PC-3 (cell line): ENCODE measurements at regions of chr16 and their contacts with region 1.

Region 1: DNA sequence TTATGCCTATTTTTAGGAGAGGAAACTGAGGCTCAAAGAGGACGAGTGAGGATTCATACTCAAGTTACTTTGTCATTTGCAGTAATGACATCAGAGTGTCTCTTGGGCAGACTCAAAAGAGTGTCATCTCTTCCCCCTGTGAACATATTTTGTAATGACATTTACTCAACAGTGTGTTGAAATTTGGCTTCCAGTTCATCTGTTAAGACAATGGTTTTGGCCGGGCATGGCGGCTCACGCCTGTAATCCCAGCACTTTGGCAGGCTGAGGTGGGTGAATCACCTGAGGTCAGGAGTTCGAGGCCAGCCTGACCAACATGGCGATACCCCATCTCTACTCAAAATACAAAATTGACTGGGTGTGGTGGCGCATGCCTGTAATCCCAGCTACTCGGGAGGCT is 28.9 kb downstream of the WFDC1 start:
- DNase-seq: no peak
- ATAC-seq: no peak
- H3K4me3 ChIP-seq: no peak overlapping the region
- H3K27ac ChIP-seq: no peak overlapping the region
- H3K4me1 ChIP-seq: no peaks in the 10 kb centered on the region
- H3K27me3 ChIP-seq: no peaks in the 10 kb centered on the region
- CTCF ChIP-seq: no peak

Region 2: DNA sequence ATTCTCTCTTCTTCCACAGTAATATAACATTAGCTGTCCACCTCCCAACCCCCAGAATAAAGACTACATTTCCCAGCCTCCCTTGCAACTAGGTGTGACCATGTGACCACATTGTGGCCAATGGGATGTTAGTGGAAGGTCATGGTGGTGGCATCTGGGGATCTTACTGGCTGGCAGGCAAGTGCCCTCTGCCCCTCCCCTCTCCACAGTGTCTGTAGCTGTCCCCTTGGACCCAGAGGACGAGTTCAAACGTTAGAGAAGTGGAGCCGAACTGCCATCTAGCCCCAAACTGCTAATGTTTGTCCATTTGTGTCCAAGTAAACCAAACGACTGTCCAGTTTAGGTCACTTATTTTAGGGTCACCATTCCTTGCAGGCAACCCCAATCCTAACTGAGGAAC is 57.2 kb before region 1 on chr16:
- CTCF ChIA-PET with region 1: no interaction called
- POLR2A ChIA-PET with region 1: no interaction called
- intact Hi-C with region 1: loop called (anchors 2 kb)
- DNase-seq: peak; percentile 51
- ATAC-seq: peak; percentile 57; the same call in 1 of the 2 replicates
- H3K4me3 ChIP-seq: no peak overlapping the region
- H3K27ac ChIP-seq: no peak overlapping the region
- H3K4me1 ChIP-seq: no peaks in the 10 kb centered on the region
- H3K27me3 ChIP-seq: no peaks in the 10 kb centered on the region
- CTCF ChIP-seq: no peak

Region 3: GRCh38 chr16:84277237-84277823 is 46.3 kb before region 1 on chr16:
- CTCF ChIA-PET with region 1: no interaction called
- POLR2A ChIA-PET with region 1: no interaction called
- intact Hi-C with region 1: no loop called
- DNase-seq: peak; percentile 68
- ATAC-seq: peak; percentile 80
- H3K4me3 ChIP-seq: no peak overlapping the region
- H3K27ac ChIP-seq: no peak overlapping the region
- H3K4me1 ChIP-seq: no peaks in the 10 kb centered on the region
- H3K27me3 ChIP-seq: no peaks in the 10 kb centered on the region
- CTCF ChIP-seq: peak; percentile 85

Region 4: DNA sequence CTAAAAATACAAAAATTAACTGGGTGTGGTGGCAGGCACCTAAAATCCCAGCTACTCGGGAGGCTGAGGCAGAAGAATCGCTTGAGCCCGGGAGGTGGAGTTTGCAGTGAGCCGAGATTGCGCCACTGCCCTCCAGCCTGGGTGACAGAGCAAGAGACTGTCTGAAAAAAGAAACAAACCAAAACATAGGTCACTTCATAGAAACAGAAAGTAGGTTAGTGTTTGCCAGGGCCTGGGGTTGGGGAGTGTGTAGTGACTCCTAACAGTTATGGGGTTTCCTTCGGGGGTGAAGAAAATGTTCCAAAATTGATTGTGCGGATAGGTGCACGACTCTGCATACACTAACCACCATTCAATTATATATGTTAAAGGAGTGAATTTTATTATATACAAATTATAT is 103.9 kb after region 1 on chr16:
- CTCF ChIA-PET with region 1: no interaction called
- POLR2A ChIA-PET with region 1: no interaction called
- intact Hi-C with region 1: no loop called
- DNase-seq: no peak
- ATAC-seq: no peak
- H3K4me3 ChIP-seq: no peak overlapping the region
- H3K27ac ChIP-seq: no peak overlapping the region
- H3K4me1 ChIP-seq: no peaks in the 10 kb centered on the region
- H3K27me3 ChIP-seq: no peaks in the 10 kb centered on the region
- CTCF ChIP-seq: no peak

Region 5: GRCh38 chr16:84672276-84673202 is 348.9 kb after region 1 on chr16:
- CTCF ChIA-PET with region 1: no interaction called
- POLR2A ChIA-PET with region 1: no interaction called
- intact Hi-C with region 1: no loop called
- DNase-seq: peak; percentile 71
- ATAC-seq: peak; percentile 87
- H3K4me3 ChIP-seq: no peak overlapping the region
- H3K27ac ChIP-seq: no peak overlapping the region
- H3K4me1 ChIP-seq: 0 out of 2 replicates have a peak, but pooled peaks cover 5% of the 10 kb centered on the region
- H3K27me3 ChIP-seq: no peaks in the 10 kb centered on the region
- CTCF ChIP-seq: peak; percentile 83